Activated CD4-positive, alpha-beta T cell treated with anti-CD3 and anti-CD28 coated beads for 36 hours (primary cell): ENCODE measurements at regions of chr2 and their contacts with region 1.

Region 1: DNA sequence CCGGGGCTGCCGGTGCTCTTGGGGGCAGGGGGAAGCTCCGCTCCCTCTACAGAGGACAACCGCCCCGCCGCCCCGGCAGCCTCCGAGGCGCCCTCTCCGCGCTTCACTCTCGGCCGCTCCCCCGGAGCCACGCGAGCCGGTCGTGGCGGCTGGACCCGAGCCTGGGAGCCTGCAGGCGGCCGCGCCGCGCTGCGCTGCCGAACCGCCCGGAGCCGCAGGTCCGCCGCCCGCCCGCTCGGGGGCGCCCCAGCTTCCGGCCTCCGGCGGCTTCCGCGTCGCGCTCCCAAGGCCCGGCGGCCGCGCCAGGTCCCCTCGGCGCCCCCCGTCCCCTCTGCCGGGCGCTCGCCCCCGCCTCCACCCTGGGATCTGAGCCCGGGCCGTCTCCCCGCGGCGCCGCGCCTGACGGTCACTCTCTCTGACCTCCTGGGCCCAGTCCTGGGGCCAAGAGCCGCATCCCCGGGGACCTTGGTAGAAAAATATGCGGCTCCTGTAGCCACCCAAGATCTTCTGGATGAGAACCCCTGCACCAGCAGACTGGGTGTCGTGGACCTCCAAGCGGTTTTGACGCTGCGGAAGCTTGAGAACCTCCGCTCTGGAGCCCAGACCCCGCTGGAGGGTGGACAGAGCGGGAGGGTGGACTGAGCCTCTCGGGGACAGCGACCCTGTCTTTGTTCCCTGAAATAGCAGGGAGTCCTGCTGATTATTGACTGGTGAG is 44.3 kb downstream of the SERTAD2 start:
- DNase-seq: peak; percentile 82
- ATAC-seq: peak; percentile 61
- H3K4me3 Mint-ChIP-seq: peak overlapping the region; percentile 65
- H3K27ac Mint-ChIP-seq: no peak overlapping the region
- H3K4me1 Mint-ChIP-seq: peaks cover 25% of the 10 kb centered on the region
- H3K27me3 Mint-ChIP-seq: no peaks in the 10 kb centered on the region

Region 2: GRCh38 chr2:64622443-64623241 is 13.3 kb after region 1 on chr2:
- CTCF ChIA-PET with region 1: interaction called, 11 read pairs
- POLR2A ChIA-PET with region 1: no interaction called
- intact Hi-C with region 1: no loop called
- DNase-seq: no peak
- ATAC-seq: no peak
- H3K4me3 Mint-ChIP-seq: no peak overlapping the region
- H3K27ac Mint-ChIP-seq: no peak overlapping the region
- H3K4me1 Mint-ChIP-seq: no peaks in the 10 kb centered on the region
- H3K27me3 Mint-ChIP-seq: no peaks in the 10 kb centered on the region

Region 3: DNA sequence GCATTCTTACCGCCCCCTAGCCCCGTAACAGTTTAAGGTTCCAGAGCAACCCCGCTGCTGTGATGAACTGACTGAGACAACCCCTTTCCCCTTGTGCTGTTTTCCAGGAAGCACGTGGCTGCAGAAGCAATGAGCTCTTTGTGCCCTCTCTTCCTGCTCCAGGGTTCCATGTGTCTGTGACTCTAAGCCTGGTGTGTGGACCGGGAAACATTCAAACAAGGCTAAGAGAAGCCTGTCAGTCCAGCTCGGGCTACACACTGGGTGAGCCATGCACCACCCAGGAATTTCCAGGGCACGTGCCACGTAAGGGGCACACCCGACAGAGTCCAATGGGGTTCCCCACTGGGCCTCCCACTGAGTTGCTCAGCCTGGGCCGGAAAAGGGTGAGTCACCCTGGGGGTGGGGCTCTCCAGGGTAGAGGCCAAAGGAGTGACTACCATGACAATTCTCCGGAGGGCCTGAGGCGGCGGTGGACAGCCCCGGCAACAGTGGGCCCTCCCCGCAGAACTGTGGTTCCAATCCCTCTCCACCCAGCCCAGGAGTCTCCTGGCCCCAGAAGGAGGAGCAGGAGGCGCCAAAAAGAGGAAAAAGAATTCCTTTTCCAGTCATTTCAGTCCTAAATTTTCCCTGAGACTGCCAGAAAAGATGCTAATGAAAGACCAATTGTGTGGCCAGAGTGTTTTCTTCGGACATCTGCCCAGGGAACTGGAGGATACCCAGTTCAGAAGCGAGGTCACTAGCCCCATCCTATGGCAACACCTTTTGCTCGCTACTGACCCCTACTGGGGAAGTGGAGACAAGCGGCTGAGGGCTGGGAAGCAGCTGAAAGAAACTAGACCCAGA is 222.0 kb after region 1 on chr2:
- CTCF ChIA-PET with region 1: interaction called, 6 read pairs
- POLR2A ChIA-PET with region 1: no interaction called
- intact Hi-C with region 1: loop called in 1 of 2 experiments (anchors 1 kb)
- DNase-seq: peak; percentile 92
- ATAC-seq: peak; percentile 96
- H3K4me3 Mint-ChIP-seq: peak overlapping the region; percentile 34
- H3K27ac Mint-ChIP-seq: peak overlapping the region; percentile 86
- H3K4me1 Mint-ChIP-seq: peaks cover 16% of the 10 kb centered on the region
- H3K27me3 Mint-ChIP-seq: no peaks in the 10 kb centered on the region

Region 4: GRCh38 chr2:64865073-64865830 is 255.9 kb after region 1 on chr2:
- CTCF ChIA-PET with region 1: interaction called, 12 read pairs
- POLR2A ChIA-PET with region 1: interaction called, 3 read pairs
- intact Hi-C with region 1: loop called (anchors 2 to 5 kb)
- DNase-seq: peak; percentile 78
- ATAC-seq: peak; percentile 74
- H3K4me3 Mint-ChIP-seq: peak overlapping the region; percentile 52
- H3K27ac Mint-ChIP-seq: no peak overlapping the region
- H3K4me1 Mint-ChIP-seq: no peaks in the 10 kb centered on the region
- H3K27me3 Mint-ChIP-seq: peaks cover 6% of the 10 kb centered on the region